ENCODE measurements at regions of chr7 and their contacts with region 1.

Region 1: GRCh38 chr7:66628361-66629140 is at the start of gene KCTD7:
- DNase-seq: peak; percentile 99 to 100
- ATAC-seq: peak; percentile 92 to 97 (median 96)
- H3K4me3 ChIP-seq: peak within 1 kb of the TSS; percentile 87
- H3K27ac ChIP-seq: peak within 1 kb of the TSS; percentile 96
- H3K4me1 ChIP-seq: peaks cover 5% of the 10 kb centered on the region
- H3K27me3 ChIP-seq: no peaks in the 10 kb centered on the region
- CTCF ChIP-seq: no peak
- total RNA-seq, gene KCTD7: 2.6 to 7.8 (median 4.0) TPM

Region 2: GRCh38 chr7:66529883-66530610 is 98.5 kb before region 1 on chr7:
- intact Hi-C with region 1: no loop called
- DNase-seq: no peak
- ATAC-seq: no peak
- H3K4me3 ChIP-seq: no peak overlapping the region
- H3K27ac ChIP-seq: no peak overlapping the region
- H3K4me1 ChIP-seq: no peaks in the 10 kb centered on the region
- H3K27me3 ChIP-seq: no peaks in the 10 kb centered on the region
- CTCF ChIP-seq: no peak

Region 3: DNA sequence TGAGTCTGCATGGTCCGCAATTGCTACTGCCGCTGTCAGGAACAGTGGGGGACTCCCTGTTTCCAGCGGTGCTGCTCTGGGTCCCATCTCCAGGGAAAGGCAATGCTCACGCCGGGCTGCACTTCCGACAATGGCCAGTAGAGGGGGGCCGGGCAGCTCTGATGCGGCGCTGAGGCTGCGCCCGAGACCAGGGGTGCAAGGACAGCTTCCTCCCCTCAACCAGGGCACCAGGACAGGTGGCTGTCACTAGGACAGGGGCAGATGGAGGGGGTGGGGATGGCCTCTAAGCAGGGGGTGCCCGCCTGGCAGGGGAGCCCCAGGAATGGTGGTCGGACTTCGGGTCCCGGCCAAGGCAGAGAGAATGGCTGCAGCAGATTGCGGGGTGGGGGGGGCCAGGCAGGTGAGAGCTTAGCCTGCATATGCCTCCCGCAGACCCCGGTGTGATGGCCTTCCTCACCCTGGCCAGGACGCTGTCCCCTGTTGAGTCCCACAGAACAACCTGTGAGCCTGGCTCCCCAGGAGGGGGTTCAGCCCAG is 70.9 kb before region 1 on chr7:
- intact Hi-C with region 1: loop called in 1 of 2 experiments (anchors 5 kb)
- DNase-seq: peak; percentile 75 to 87
- ATAC-seq: peak; percentile 78 to 92 (median 90)
- H3K4me3 ChIP-seq: no peak overlapping the region
- H3K27ac ChIP-seq: no peak overlapping the region
- H3K4me1 ChIP-seq: no peaks in the 10 kb centered on the region
- H3K27me3 ChIP-seq: no peaks in the 10 kb centered on the region
- CTCF ChIP-seq: peak; percentile 90

Region 4: DNA sequence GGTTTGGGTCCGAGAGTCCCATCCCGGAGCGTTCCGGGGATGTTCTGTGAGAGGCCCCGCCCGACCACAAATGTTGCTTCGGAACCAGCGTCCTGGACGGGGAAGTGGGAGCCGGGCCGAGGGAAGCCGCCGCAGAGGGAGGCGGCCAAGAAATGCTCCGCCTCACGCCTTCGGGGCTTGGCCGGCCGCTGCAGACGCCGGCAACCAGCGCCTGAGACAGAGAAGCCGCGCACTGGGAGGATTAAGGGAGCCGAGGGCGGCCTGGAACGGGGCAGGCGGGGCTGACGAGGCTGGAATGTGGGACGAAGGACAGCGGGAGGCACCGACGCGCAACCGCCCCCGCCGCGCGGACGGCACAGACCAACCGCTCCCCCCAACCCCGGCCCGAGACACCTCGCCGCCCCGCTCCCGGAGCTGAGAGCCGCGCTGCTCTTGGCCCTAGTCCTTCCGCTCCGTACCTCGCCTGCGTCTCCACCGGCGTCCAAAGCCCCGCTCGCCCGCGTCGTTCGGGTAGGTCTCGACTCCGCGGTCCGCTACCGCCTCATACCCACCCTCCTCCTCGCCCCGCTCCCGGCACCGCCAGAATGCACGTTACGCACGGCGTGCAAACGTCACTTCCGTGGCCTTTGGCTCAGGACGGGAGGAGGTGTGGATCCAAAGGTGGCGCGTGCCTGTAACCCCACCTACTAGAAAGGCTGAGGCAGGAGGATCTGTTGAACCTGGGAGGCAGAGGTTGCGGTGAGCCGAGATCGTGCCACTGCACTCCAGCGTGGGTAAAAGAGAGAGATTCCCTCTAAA is 36.6 kb before region 1 on chr7:
- intact Hi-C with region 1: loop called (anchors 2 kb)
- DNase-seq: peak; percentile 92 to 95
- ATAC-seq: peak; percentile 95 to 96 (median 96)
- H3K4me3 ChIP-seq: peak overlapping the region; percentile 82
- H3K27ac ChIP-seq: peak overlapping the region; percentile 95
- H3K4me1 ChIP-seq: peaks cover 35% of the 10 kb centered on the region
- H3K27me3 ChIP-seq: no peaks in the 10 kb centered on the region
- CTCF ChIP-seq: no peak

Region 5: DNA sequence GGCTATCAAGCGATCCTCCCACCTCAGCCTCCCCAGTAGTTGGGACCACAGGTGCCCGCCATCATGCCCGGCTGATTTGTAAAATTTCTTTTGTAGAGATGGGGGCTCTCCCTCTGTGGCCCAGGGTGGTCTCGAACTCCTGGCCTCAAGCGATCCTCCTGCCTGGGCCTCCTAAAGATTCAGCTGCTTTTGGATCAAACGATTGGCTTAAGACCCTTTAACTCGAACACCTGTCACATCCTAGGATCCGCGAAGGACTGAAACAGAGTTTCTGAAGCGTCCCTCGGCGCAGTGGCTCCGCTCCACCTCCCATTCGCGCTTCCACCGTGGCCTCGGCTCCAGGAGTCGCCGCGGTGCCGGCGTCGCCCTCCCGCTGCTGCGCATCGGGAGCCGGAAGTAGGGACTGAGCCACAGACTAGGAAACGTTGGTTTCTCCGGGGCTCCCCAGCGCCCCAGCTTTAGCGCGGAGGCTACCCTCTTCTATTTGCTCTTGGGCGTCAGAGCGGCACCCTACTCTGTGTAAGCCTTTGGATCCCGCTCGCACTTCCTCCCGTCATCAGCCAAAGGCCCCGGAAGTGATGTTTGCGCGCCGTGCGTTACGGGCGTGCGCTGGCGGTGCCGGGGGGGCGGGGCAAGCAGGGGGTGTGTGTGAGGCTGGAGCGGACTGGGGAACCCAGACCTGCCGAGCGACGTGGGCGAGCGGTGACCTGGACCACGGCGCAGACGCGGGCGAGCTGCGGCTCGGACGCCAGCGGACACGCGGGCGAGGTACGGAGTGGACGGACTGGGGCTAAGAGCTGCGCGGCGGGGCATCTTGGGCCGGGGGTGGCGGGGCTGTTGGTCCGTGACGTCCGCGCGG is 53.2 kb after region 1 on chr7:
- intact Hi-C with region 1: loop called in 1 of 2 experiments (anchors 2 kb)
- DNase-seq: peak; percentile 97 to 98
- ATAC-seq: peak; percentile 99
- H3K4me3 ChIP-seq: peak overlapping the region; percentile 99
- H3K27ac ChIP-seq: peak overlapping the region; percentile 99
- H3K4me1 ChIP-seq: peaks cover 15% of the 10 kb centered on the region
- H3K27me3 ChIP-seq: no peaks in the 10 kb centered on the region
- CTCF ChIP-seq: no peak